Common myeloid progenitor, CD34-positive (primary cell): ENCODE measurements at regions of chr11 and their contacts with region 1.

Region 1: GRCh38 chr11:75665126-75665525 is 3.7 kb downstream of the MAP6 start:
- DNase-seq: no peak
- H3K4me3 ChIP-seq: no peak overlapping the region
- H3K27ac ChIP-seq: no peak overlapping the region
- H3K4me1 ChIP-seq: peaks cover 0 to 20% (median 19%) of the 10 kb centered on the region in 4 experiments
- H3K27me3 ChIP-seq: peaks cover 6 to 72% (median 46%) of the 10 kb centered on the region in 5 experiments

Region 2: DNA sequence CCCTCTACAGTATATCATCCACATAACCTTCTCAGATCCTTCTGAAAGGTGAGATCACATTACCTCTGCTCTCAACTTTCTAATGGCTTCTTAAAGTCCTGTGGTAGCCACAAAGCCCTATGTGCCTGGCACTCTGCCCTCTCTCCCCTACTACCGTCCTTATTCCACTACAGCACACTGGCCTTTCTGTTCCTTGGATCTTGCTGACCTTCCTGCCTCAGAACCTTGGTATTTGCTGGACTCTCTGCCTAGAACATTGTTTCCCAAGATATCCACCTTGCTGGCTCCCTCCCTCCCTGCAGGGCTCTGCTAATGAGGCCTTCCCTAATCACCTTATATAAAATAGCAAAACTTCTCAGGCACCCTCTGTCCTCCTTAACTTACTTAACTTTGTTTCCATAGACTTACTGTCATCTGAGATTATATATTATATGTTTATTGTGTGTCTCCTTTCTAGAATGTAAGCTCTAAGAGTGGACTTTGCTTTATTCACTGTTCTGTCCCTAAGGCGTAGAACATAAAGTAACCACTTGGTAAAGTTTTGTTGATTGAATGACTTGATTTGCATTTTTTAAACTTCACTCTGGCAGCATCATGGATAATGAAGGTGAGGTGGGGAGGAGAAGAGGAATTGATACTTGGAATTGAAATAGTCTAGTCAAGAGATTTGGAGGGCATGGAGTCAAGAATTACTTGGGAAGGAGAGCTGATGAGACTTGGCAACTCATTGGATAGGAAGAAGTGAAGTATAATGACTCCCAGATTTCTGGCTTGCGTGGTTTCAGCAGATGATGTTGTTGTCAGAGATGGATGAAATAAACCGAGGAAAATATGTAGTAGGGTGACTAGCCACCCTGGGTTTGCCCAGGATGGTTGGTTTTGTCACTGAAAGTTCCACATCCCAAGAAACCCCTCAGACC is 1062.2 kb before region 1 on chr11:
- CTCF ChIA-PET with region 1: no interaction called
- POLR2A ChIA-PET with region 1: interaction called, 10 read pairs
- DNase-seq: no peak
- H3K4me3 ChIP-seq: no peak overlapping the region
- H3K27ac ChIP-seq: no peak overlapping the region
- H3K4me1 ChIP-seq: no peaks in the 10 kb centered on the region
- H3K27me3 ChIP-seq: no peaks in the 10 kb centered on the region

Region 3: GRCh38 chr11:75714211-75714610 is 49.1 kb after region 1 on chr11:
- CTCF ChIA-PET with region 1: no interaction called
- POLR2A ChIA-PET with region 1: no interaction called
- DNase-seq: peak; percentile 20 to 55 (median 47)
- H3K4me3 ChIP-seq: no peak overlapping the region
- H3K27ac ChIP-seq: no peak overlapping the region
- H3K4me1 ChIP-seq: no peaks in the 10 kb centered on the region
- H3K27me3 ChIP-seq: no peaks in the 10 kb centered on the region